ENCODE measurements at regions of chr12 and their contacts with region 1.

Region 1: GRCh38 chr12:96194971-96195844 is 1.0 kb downstream of the ELK3 start:
- DNase-seq: peak; percentile 75
- ATAC-seq: peak; percentile 37
- H3K4me3 ChIP-seq: peak overlapping the region; percentile 86 to 88
- H3K27ac ChIP-seq: peak overlapping the region; percentile 94
- H3K4me1 ChIP-seq: peaks cover 43 to 54% of the 10 kb centered on the region in 2 experiments
- H3K27me3 ChIP-seq: no peaks in the 10 kb centered on the region
- CTCF ChIP-seq: no peak
- POLR2A ChIP-seq: no peak
- RAD21 ChIP-seq: no peak

Region 2: GRCh38 chr12:96047229-96048211 is 147.7 kb before region 1 on chr12:
- CTCF ChIA-PET with region 1: no interaction called
- POLR2A ChIA-PET with region 1: no interaction called
- RAD21 ChIA-PET with region 1: no interaction called
- intact Hi-C with region 1: loop called (anchors 5 kb)
- DNase-seq: peak; percentile 93
- ATAC-seq: peak; percentile 81
- H3K4me3 ChIP-seq: peak overlapping the region in 1 of 2 experiments; percentile 29; a peak in 2 of 4 replicates
- H3K27ac ChIP-seq: peak overlapping the region; percentile 85
- H3K4me1 ChIP-seq: peaks cover 36 to 57% of the 10 kb centered on the region in 2 experiments
- H3K27me3 ChIP-seq: no peaks in the 10 kb centered on the region
- CTCF ChIP-seq: no peak
- POLR2A ChIP-seq: no peak
- RAD21 ChIP-seq: peak; percentile 27; the same call in 1 of the 2 replicates

Region 3: GRCh38 chr12:96399919-96400797 is 204.9 kb after region 1 on chr12 and contains the start of gene CDK17:
- CTCF ChIA-PET with region 1: no interaction called
- POLR2A ChIA-PET with region 1: no interaction called
- RAD21 ChIA-PET with region 1: no interaction called
- intact Hi-C with region 1: no loop called
- DNase-seq: peak; percentile 50
- ATAC-seq: peak; percentile 76
- H3K4me3 ChIP-seq: peak within 1 kb of the TSS; percentile 59 to 70
- H3K27ac ChIP-seq: peak within 1 kb of the TSS; percentile 98
- H3K4me1 ChIP-seq: peaks cover 10 to 20% of the 10 kb centered on the region in 2 experiments; a peak in 3 of 4 replicates
- H3K27me3 ChIP-seq: no peaks in the 10 kb centered on the region
- CTCF ChIP-seq: peak in 1 of 3 experiments; percentile 39; a peak in 1 of 6 replicates
- POLR2A ChIP-seq: peak; percentile 39
- RAD21 ChIP-seq: peak; percentile 49
- total RNA-seq, gene CDK17: 21.4 TPM